Naive thymus-derived CD8-positive, alpha-beta T cell (primary cell): ENCODE measurements at regions of chr7 and their contacts with region 1.

Region 1: GRCh38 chr7:44581879-44582603 is at the start of gene TMED4:
- DNase-seq: peak; percentile 99 to 100 (median 100)
- ATAC-seq: peak; percentile 84 to 85
- H3K4me3 Mint-ChIP-seq: peak within 1 kb of the TSS; percentile 87 to 93 (median 91)
- H3K27ac Mint-ChIP-seq: peak within 1 kb of the TSS; percentile 91 to 99 (median 98)
- H3K4me1 Mint-ChIP-seq: peaks cover 14 to 37% (median 35%) of the 10 kb centered on the region in 4 donors
- H3K27me3 Mint-ChIP-seq: peaks cover 0 to 3% (median 0%) of the 10 kb centered on the region in 5 donors
- polyA plus RNA-seq, gene TMED4: 61.4 to 80.4 (median 71.8) TPM

Region 2: GRCh38 chr7:44515590-44516268 is 66.3 kb before region 1 on chr7:
- POLR2A ChIA-PET with region 1: no interaction called
- DNase-seq: no peak
- ATAC-seq: no peak
- H3K4me3 Mint-ChIP-seq: no peak overlapping the region
- H3K27ac Mint-ChIP-seq: no peak overlapping the region
- H3K4me1 Mint-ChIP-seq: no peaks in the 10 kb centered on the region
- H3K27me3 Mint-ChIP-seq: peaks cover 0 to 9% (median 2%) of the 10 kb centered on the region in 5 donors

Region 3: DNA sequence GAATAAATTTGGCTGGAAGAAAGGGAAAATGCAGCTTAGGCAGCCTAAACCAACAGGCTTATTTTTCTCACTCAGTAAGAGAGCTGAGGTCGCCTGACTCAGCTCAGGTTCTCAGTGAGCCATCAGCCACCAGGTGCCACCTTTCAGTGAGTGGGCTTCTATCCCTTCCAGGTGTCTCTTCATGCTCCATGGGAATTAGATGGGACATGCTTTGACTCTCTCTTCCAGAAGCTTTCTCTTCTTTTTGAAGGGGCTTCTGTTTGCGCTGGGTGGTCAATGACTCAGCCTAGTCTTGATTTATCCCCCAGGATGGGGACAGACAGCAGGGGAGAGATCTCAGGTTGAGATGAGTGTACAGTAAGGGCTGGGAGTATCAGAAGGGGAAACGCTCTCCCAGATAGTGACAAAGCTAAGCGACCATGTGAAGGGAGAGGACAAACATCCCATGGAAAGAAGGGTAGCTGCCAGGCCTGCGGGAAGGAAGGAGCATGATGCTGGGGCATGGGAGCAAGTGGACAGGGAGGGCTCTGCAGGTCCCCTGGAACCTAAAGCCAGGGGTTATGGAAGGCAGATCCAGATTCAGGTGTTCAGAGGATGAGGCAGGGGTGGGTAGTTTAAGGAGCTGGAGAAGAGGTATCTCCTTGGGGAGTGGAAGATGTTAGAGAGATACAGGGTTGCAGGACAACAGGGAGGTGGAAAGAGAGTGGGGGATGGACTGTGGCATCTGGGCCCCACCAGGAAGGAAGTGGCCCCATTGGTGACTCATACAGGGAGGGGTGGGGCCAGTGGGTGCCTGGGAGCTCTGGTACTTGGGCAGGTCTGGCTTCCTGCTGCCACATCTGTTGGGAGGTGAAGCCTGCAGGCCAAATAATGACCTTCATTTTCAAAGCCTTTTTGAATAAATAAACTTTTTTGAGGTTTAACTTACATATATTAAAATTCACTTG is 56.8 kb after region 1 on chr7:
- POLR2A ChIA-PET with region 1: interaction called, 13 read pairs
- DNase-seq: peak; percentile 32 to 87 (median 51)
- ATAC-seq: peak; percentile 59 to 64
- H3K4me3 Mint-ChIP-seq: peak overlapping the region; percentile 51 to 94 (median 83)
- H3K27ac Mint-ChIP-seq: peak overlapping the region; percentile 96 to 99 (median 98)
- H3K4me1 Mint-ChIP-seq: peaks cover 29 to 87% (median 68%) of the 10 kb centered on the region in 4 donors
- H3K27me3 Mint-ChIP-seq: no peaks in the 10 kb centered on the region

Region 4: GRCh38 chr7:44797329-44798251 is 215.5 kb after region 1 on chr7:
- POLR2A ChIA-PET with region 1: interaction called, 19 read pairs
- DNase-seq: peak; percentile 70 to 92 (median 80)
- ATAC-seq: peak; percentile 48 to 59
- H3K4me3 Mint-ChIP-seq: peak overlapping the region; percentile 87 to 100 (median 95)
- H3K27ac Mint-ChIP-seq: peak overlapping the region; percentile 90 to 99 (median 98)
- H3K4me1 Mint-ChIP-seq: peaks cover 15 to 47% (median 45%) of the 10 kb centered on the region in 4 donors
- H3K27me3 Mint-ChIP-seq: no peaks in the 10 kb centered on the region